Activated naive CD4-positive, alpha-beta T cell treated with anti-CD3 and anti-CD28 coated beads for 36 hours (primary cell): ENCODE measurements at regions of chr12 and their contacts with region 1.

Region 1: GRCh38 chr12:116066381-116067230 is 210.9 kb downstream of the MED13L start:
- DNase-seq: peak; percentile 74
- H3K4me3 Mint-ChIP-seq: no peak overlapping the region
- H3K27ac Mint-ChIP-seq: no peak overlapping the region
- H3K4me1 Mint-ChIP-seq: peaks cover 34% of the 10 kb centered on the region
- H3K27me3 Mint-ChIP-seq: no peaks in the 10 kb centered on the region

Region 2: GRCh38 chr12:116135209-116135930 is 68.8 kb after region 1 on chr12:
- CTCF ChIA-PET with region 1: interaction called, 3 read pairs
- intact Hi-C with region 1: loop called (anchors 2 kb)
- DNase-seq: no peak
- H3K4me3 Mint-ChIP-seq: no peak overlapping the region
- H3K27ac Mint-ChIP-seq: peak overlapping the region; percentile 89
- H3K4me1 Mint-ChIP-seq: peaks cover 76% of the 10 kb centered on the region
- H3K27me3 Mint-ChIP-seq: no peaks in the 10 kb centered on the region

Region 3: DNA sequence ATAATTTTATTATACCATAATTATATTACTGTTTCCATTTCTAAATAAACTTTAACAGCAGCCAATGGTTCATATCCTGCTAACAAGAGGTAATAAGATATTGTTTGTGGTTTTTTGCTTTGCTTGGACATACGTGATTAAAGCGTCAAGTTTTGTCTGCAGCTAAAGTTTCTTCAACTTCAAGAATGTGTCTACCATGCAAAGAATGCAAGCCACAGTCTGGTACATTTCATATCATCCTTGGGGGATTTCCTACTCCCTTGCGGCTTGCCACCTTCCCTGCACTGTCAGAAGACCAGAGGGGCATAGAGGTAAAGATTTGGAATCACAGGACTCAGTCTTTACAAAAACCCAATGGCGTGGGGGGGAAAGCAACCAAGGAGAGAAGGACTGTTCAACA is 85.7 kb after region 1 on chr12:
- CTCF ChIA-PET with region 1: no interaction called
- intact Hi-C with region 1: no loop called
- DNase-seq: no peak
- H3K4me3 Mint-ChIP-seq: no peak overlapping the region
- H3K27ac Mint-ChIP-seq: no peak overlapping the region
- H3K4me1 Mint-ChIP-seq: peaks cover 45% of the 10 kb centered on the region
- H3K27me3 Mint-ChIP-seq: no peaks in the 10 kb centered on the region

Region 4: GRCh38 chr12:116194935-116195431 is 128.4 kb after region 1 on chr12:
- CTCF ChIA-PET with region 1: interaction called, 4 read pairs
- intact Hi-C with region 1: loop called (anchors 1 kb)
- DNase-seq: peak; percentile 87
- H3K4me3 Mint-ChIP-seq: no peak overlapping the region
- H3K27ac Mint-ChIP-seq: no peak overlapping the region
- H3K4me1 Mint-ChIP-seq: peaks cover 53% of the 10 kb centered on the region
- H3K27me3 Mint-ChIP-seq: no peaks in the 10 kb centered on the region

Region 5: DNA sequence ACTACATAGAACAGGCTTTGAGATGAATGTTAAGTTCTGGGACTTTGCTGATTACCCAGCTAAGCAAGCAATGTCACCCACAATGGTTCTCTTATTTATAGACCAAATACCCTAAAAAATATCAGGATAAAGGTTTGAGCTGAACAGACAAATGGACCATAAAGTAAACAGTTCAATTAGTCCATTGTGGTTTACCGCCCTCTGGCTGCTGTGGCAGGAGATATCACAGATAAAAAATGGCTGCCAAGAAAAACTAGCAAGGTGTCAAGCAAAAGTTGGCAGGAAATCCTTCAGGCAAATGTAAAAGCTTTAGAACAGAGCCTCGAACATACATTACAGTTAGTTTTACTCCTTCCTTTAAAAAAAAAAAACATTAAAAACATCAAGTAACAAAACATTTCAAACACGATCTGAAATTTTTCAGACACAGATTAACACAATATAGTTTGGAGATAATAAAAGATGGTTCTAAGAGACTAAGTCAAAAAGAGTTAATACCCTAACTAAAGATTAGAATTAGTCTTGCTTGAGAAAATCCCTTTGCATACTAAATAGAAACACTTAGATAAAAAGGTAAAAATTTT is 169.6 kb after region 1 on chr12:
- CTCF ChIA-PET with region 1: interaction called, 4 read pairs
- intact Hi-C with region 1: loop called (anchors 1 kb)
- DNase-seq: peak; percentile 77
- H3K4me3 Mint-ChIP-seq: peak overlapping the region; percentile 4
- H3K27ac Mint-ChIP-seq: peak overlapping the region; percentile 71
- H3K4me1 Mint-ChIP-seq: peaks cover 37% of the 10 kb centered on the region
- H3K27me3 Mint-ChIP-seq: no peaks in the 10 kb centered on the region